ENCODE measurements at regions of chr7 and their contacts with region 1.

Region 1: GRCh38 chr7:18345641-18346234 is 149.8 kb upstream of the HDAC9 start:
- DNase-seq: no peak
- H3K4me3 ChIP-seq: no peak overlapping the region
- CTCF ChIP-seq: peak; percentile 54

Region 2: DNA sequence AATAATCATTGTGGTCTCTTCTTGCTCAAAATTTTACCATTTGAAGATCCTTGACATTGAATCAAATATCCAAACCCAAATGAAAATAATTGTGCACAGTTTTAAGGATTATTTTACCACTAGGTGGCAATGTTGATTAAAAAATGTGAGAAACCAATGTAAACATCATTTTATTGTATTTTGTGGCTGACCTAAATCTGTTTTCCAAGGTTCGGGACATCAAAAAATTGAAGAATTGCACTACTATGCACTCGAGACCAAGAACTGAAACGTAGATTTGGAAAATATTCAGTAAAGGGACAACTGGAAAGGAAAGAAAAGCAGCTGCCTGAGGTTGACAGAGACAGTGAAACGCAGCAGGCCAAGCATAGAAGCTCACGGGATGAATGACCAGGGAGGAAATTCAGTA is 664.8 kb before region 1 on chr7:
- CTCF ChIA-PET with region 1: interaction called, 99 read pairs
- POLR2A ChIA-PET with region 1: no interaction called
- DNase-seq: no peak
- H3K4me3 ChIP-seq: no peak overlapping the region
- CTCF ChIP-seq: no peak

Region 3: DNA sequence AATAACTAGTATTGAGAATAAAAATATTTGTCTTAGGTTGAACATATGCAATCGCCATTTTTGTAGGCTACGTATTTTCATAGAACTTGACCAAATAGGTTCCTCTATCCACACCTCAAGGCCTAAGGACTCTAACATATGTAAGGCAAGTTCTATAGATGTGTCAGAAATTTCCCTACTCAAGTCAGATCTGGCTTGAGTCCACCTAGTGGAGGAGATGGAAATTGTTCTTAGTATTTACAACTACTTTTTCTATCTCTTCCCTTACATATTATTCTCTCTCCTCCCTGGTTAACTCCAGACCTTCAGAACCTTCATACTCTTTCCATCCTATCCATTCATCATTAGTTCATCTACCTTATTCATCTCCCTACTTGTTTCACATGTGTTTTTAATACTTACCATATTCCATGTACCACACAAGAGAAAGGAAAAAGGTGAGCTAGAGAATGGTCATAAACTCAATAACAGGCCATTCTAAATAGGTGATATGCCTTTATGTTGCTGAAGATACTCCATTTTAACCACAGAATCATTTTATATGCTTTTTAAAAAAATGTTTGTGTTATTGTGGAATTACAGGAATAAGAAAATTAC is 24.7 kb before region 1 on chr7:
- CTCF ChIA-PET with region 1: interaction called, 10 read pairs
- POLR2A ChIA-PET with region 1: no interaction called
- DNase-seq: peak; percentile 16
- H3K4me3 ChIP-seq: no peak overlapping the region
- CTCF ChIP-seq: peak; percentile 54

Region 4: GRCh38 chr7:18330548-18330947 is 15.2 kb before region 1 on chr7:
- CTCF ChIA-PET with region 1: interaction called, 11 read pairs
- POLR2A ChIA-PET with region 1: no interaction called
- DNase-seq: no peak
- H3K4me3 ChIP-seq: no peak overlapping the region
- CTCF ChIP-seq: no peak

Region 5: GRCh38 chr7:18570890-18571478 is 225.2 kb after region 1 on chr7:
- CTCF ChIA-PET with region 1: interaction called, 382 read pairs
- POLR2A ChIA-PET with region 1: no interaction called
- DNase-seq: no peak
- H3K4me3 ChIP-seq: no peak overlapping the region
- CTCF ChIP-seq: peak; percentile 19